Naive thymus-derived CD8-positive, alpha-beta T cell (primary cell): ENCODE measurements at regions of chr14 and their contacts with region 1.

Region 1: GRCh38 chr14:24160850-24161804 is at the start of gene IRF9:
- DNase-seq: peak; percentile 94 to 99 (median 97)
- ATAC-seq: peak; percentile 89 to 90
- H3K4me3 Mint-ChIP-seq: peak within 1 kb of the TSS; percentile 95 to 100 (median 98)
- H3K27ac Mint-ChIP-seq: peak within 1 kb of the TSS; percentile 92 to 100 (median 99)
- H3K4me1 Mint-ChIP-seq: peaks cover 27 to 64% (median 55%) of the 10 kb centered on the region in 4 donors
- H3K27me3 Mint-ChIP-seq: peaks cover 0 to 2% (median 0%) of the 10 kb centered on the region in 5 donors
- polyA plus RNA-seq, gene IRF9: 46.6 to 68.6 (median 51.3) TPM

Region 2: GRCh38 chr14:24080888-24081738 is 80.0 kb before region 1 on chr14:
- POLR2A ChIA-PET with region 1: interaction called, 15 read pairs
- DNase-seq: peak; percentile 45 to 84 (median 66)
- ATAC-seq: peak; percentile 90
- H3K4me3 Mint-ChIP-seq: peak overlapping the region; percentile 84 to 94 (median 87)
- H3K27ac Mint-ChIP-seq: peak overlapping the region; percentile 67 to 95 (median 90)
- H3K4me1 Mint-ChIP-seq: peaks cover 13 to 28% (median 22%) of the 10 kb centered on the region in 4 donors
- H3K27me3 Mint-ChIP-seq: no peaks in the 10 kb centered on the region

Region 3: GRCh38 chr14:24114536-24115450 is 46.3 kb before region 1 on chr14 and contains the starts of genes DCAF11 and NRL:
- POLR2A ChIA-PET with region 1: interaction called, 51 read pairs
- DNase-seq: peak; percentile 96 to 100 (median 99)
- ATAC-seq: peak; percentile 84
- H3K4me3 Mint-ChIP-seq: peak within 1 kb of the TSS; percentile 89 to 99 (median 98)
- H3K27ac Mint-ChIP-seq: peak within 1 kb of the TSS; percentile 95 to 100 (median 99)
- H3K4me1 Mint-ChIP-seq: peaks cover 22 to 39% (median 37%) of the 10 kb centered on the region in 4 donors
- H3K27me3 Mint-ChIP-seq: peaks cover 0 to 4% (median 0%) of the 10 kb centered on the region in 5 donors
- polyA plus RNA-seq, gene DCAF11: 68.0 to 83.8 (median 71.9) TPM
- polyA plus RNA-seq, gene NRL: 3.0 to 3.5 (median 3.1) TPM

Region 4: GRCh38 chr14:24141097-24141880 is 19.8 kb before region 1 on chr14 and contains the start of gene EMC9:
- POLR2A ChIA-PET with region 1: interaction called, 55 read pairs
- DNase-seq: peak; percentile 95 to 100 (median 99)
- ATAC-seq: peak; percentile 90 to 93
- H3K4me3 Mint-ChIP-seq: peak within 1 kb of the TSS; percentile 88 to 96 (median 91)
- H3K27ac Mint-ChIP-seq: peak within 1 kb of the TSS; percentile 83 to 97 (median 94)
- H3K4me1 Mint-ChIP-seq: peaks cover 31 to 88% (median 79%) of the 10 kb centered on the region in 4 donors
- H3K27me3 Mint-ChIP-seq: no peaks in the 10 kb centered on the region
- polyA plus RNA-seq, gene EMC9: 7.5 to 9.4 (median 8.4) TPM

Region 5: DNA sequence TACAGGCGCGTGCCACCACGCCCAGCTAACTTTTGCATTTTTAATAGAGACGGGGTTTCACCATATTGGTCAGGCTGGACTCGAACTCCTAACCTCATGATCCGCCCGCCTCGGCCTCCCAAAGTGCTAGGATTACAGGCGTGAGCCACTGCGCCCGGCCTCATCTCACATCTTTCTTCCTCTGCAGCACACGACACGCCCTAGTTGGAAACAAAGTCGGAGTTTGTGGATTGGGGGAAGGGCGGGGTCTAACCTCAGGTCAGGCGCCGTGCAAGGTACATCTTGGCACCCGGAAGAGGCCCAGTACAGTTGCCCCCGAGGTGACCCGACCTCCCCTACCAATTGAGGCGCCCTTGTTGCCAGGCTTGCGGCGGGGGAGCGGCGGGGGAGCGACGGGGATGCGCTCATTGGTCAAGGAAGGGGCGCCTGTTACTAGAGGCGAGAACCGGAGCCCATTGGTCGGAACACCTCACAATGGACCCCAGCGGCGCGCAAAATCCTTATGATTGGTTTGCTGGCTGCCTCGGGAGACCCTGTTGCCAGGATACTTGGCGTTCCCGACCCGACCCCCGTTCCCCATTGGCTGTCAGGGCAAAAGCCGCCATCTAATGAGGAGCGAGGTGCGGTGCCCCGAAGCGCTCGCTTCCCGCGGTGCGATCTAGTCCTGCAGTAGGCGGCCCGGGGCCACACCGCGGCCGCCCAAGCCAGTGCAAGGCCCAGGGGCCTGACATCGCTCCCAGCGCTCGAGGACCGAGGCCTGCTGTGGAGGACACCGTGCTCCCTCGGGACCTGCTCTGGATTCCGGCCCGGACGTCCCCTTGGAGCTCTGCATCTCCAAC is 10.5 kb after region 1 on chr14 and contains the start of gene REC8:
- POLR2A ChIA-PET with region 1: interaction called, 27 read pairs
- DNase-seq: peak; percentile 61 to 92 (median 84)
- ATAC-seq: peak; percentile 91
- H3K4me3 Mint-ChIP-seq: peak within 1 kb of the TSS; percentile 86 to 97 (median 92)
- H3K27ac Mint-ChIP-seq: peak within 1 kb of the TSS; percentile 77 to 94 (median 92)
- H3K4me1 Mint-ChIP-seq: peaks cover 18 to 42% (median 38%) of the 10 kb centered on the region in 4 donors
- H3K27me3 Mint-ChIP-seq: no peaks in the 10 kb centered on the region
- polyA plus RNA-seq, gene REC8: 11.1 to 11.6 (median 11.2) TPM